PC-9 (cell line): ENCODE measurements at regions of chr3 and their contacts with region 1.

Region 1: GRCh38 chr3:165770781-165771180 is 66.4 kb downstream of the BCHE start:
- DNase-seq: no peak
- H3K4me3 ChIP-seq: no peak overlapping the region
- H3K27ac ChIP-seq: no peak overlapping the region
- H3K4me1 ChIP-seq: no peaks in the 10 kb centered on the region
- H3K27me3 ChIP-seq: no peaks in the 10 kb centered on the region
- CTCF ChIP-seq: no peak

Region 2: DNA sequence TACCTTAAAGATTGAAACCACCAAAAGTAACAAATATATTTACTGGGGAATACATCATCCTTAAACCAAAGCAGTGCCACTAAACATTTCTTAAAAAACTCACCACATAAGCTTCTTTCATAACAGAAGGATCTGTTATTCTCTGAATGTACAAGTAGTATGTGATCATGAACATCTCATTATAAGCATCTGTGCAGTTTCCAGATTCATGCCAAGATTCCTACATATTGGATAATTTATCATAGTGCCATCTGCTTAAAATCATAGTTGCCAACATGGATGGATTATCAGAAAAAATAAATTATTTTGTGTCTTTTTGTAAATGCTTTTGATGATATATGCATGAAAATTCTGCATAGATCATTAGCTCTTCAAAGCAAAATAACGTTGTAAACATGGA is 88.3 kb after region 1 on chr3:
- CTCF ChIA-PET with region 1: no interaction called
- POLR2A ChIA-PET with region 1: no interaction called
- intact Hi-C with region 1: no loop called
- DNase-seq: no peak
- H3K4me3 ChIP-seq: no peak overlapping the region
- H3K27ac ChIP-seq: no peak overlapping the region
- H3K4me1 ChIP-seq: no peaks in the 10 kb centered on the region
- H3K27me3 ChIP-seq: no peaks in the 10 kb centered on the region
- CTCF ChIP-seq: no peak

Region 3: GRCh38 chr3:167330993-167331785 is 1560.4 kb after region 1 on chr3:
- CTCF ChIA-PET with region 1: no interaction called
- POLR2A ChIA-PET with region 1: interaction called, 10 read pairs
- intact Hi-C with region 1: no loop called
- DNase-seq: no peak
- H3K4me3 ChIP-seq: no peak overlapping the region
- H3K27ac ChIP-seq: no peak overlapping the region
- H3K4me1 ChIP-seq: no peaks in the 10 kb centered on the region
- H3K27me3 ChIP-seq: no peaks in the 10 kb centered on the region
- CTCF ChIP-seq: no peak